ENCODE measurements at regions of chr6 and their contacts with region 1.

Region 1: GRCh38 chr6:53734473-53735299 is 60.1 kb upstream of the LRRC1 start:
- DNase-seq: peak; percentile 58
- ATAC-seq: peak; percentile 53
- H3K4me3 Mint-ChIP-seq: no peak overlapping the region
- H3K27ac Mint-ChIP-seq: peak overlapping the region; percentile 57
- H3K4me1 Mint-ChIP-seq: peaks cover 23% of the 10 kb centered on the region
- H3K27me3 Mint-ChIP-seq: no peaks in the 10 kb centered on the region
- CTCF ChIP-seq: peak; percentile 38

Region 2: DNA sequence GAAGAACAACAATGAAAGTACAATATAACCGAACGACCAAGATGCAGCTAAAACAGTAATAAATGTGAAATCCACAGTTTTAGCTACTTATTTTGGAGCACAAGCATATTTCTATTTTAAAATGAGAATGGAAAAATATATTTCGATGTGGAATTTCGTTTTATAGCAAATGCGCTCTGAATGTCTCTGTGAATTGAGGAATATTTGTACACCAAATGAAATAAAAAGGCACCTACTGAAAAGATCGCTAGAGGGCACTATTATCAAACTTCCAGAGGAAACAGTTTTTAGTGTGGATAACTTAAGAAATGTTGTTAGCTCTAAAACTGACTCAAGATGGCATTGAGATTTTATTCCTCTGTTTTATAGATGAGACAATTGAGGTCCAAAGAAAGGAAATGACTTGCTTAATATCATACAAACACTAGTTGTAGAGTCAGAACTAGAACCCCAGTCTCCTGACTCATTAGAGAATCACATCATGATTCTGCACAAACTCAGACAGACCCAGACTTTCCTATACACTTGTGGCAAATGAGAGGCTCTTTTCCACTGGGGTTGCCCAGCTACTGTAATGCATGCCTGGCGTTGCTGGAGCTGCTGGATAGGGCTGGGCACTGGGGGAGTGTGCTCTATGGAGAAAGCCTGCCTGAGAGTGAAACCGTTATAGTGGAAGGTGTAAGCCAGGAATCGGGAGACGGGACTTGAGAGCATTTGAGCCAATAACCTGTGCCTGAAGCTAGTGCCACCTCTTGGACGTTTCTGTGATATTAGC is 241.6 kb before region 1 on chr6:
- CTCF ChIA-PET with region 1: interaction called, 224 read pairs
- POLR2A ChIA-PET with region 1: no interaction called
- intact Hi-C with region 1: loop called (anchors 2 kb)
- DNase-seq: peak; percentile 44
- ATAC-seq: peak; percentile 89
- H3K4me3 Mint-ChIP-seq: no peak overlapping the region
- H3K27ac Mint-ChIP-seq: peak overlapping the region; percentile 32
- H3K4me1 Mint-ChIP-seq: peaks cover 6% of the 10 kb centered on the region
- H3K27me3 Mint-ChIP-seq: peaks cover 13% of the 10 kb centered on the region
- CTCF ChIP-seq: peak; percentile 77

Region 3: GRCh38 chr6:53794720-53795253 is 60.1 kb after region 1 on chr6 and contains the start of gene LRRC1:
- CTCF ChIA-PET with region 1: interaction called, 3 read pairs
- POLR2A ChIA-PET with region 1: no interaction called
- intact Hi-C with region 1: loop called (anchors 5 kb)
- DNase-seq: peak; percentile 85
- ATAC-seq: peak; percentile 79
- H3K4me3 Mint-ChIP-seq: peak within 1 kb of the TSS; percentile 97
- H3K27ac Mint-ChIP-seq: peak within 1 kb of the TSS; percentile 91
- H3K4me1 Mint-ChIP-seq: peaks cover 14% of the 10 kb centered on the region
- H3K27me3 Mint-ChIP-seq: peaks cover 25% of the 10 kb centered on the region
- CTCF ChIP-seq: no peak
- total RNA-seq, gene LRRC1: 1.9 to 2.5 TPM

Region 4: GRCh38 chr6:53943395-53943794 is 208.7 kb after region 1 on chr6:
- CTCF ChIA-PET with region 1: no interaction called
- POLR2A ChIA-PET with region 1: no interaction called
- intact Hi-C with region 1: loop called (anchors 10 kb)
- DNase-seq: no peak
- ATAC-seq: no peak
- H3K4me3 Mint-ChIP-seq: no peak overlapping the region
- H3K27ac Mint-ChIP-seq: no peak overlapping the region
- H3K4me1 Mint-ChIP-seq: peaks cover 6% of the 10 kb centered on the region
- H3K27me3 Mint-ChIP-seq: peaks cover 18% of the 10 kb centered on the region
- CTCF ChIP-seq: no peak

Region 5: GRCh38 chr6:53956068-53956711 is 221.5 kb after region 1 on chr6:
- CTCF ChIA-PET with region 1: interaction called, 11 read pairs
- POLR2A ChIA-PET with region 1: no interaction called
- intact Hi-C with region 1: no loop called
- DNase-seq: peak; percentile 42
- ATAC-seq: peak; percentile 58
- H3K4me3 Mint-ChIP-seq: no peak overlapping the region
- H3K27ac Mint-ChIP-seq: no peak overlapping the region
- H3K4me1 Mint-ChIP-seq: no peaks in the 10 kb centered on the region
- H3K27me3 Mint-ChIP-seq: peaks cover 3% of the 10 kb centered on the region
- CTCF ChIP-seq: peak; percentile 40

Measured in activated CD8-positive, alpha-beta T cell treated with anti-CD3 and anti-CD28 coated beads for 36 hours (primary cell).